ENCODE measurements at regions of chr16 and their contacts with region 1.

Region 1: DNA sequence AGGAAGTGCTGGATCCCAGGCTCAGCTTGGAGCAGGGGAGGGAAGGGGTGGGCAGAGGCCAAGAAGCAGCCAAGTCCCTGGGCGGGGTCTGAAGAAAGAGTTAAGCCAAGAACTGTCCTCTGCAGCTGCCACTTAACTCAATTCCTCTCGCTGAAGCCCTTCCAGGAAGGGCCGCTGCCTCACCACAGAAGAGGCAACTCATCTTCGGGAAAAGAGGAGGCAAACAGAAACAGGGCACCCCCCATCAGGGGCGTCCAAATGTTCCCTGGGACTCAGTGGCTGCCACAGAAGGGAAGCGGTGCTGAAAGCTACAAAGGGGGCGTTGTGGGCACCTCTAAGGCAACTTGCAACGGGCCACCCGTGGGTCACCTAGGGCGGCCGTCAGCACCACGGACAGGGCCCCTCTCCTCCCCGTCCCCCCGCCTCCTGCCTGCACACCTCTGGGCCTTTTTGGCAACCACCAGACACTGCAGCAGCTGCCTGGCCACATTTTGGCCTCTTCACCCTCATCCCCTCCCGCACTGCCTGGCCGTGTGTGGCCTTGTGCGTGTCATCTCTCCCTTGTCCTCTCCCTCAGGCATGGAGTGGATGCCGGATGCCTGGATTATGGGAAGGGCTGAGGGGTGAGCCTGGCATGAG is 2.5 kb downstream of the TLCD3B start:
- DNase-seq: peak; percentile 33
- H3K4me3 ChIP-seq: no peak overlapping the region
- H3K27ac ChIP-seq: no peak overlapping the region
- H3K4me1 ChIP-seq: no peaks in the 10 kb centered on the region
- H3K27me3 ChIP-seq: peaks cover 44% of the 10 kb centered on the region

Region 2: DNA sequence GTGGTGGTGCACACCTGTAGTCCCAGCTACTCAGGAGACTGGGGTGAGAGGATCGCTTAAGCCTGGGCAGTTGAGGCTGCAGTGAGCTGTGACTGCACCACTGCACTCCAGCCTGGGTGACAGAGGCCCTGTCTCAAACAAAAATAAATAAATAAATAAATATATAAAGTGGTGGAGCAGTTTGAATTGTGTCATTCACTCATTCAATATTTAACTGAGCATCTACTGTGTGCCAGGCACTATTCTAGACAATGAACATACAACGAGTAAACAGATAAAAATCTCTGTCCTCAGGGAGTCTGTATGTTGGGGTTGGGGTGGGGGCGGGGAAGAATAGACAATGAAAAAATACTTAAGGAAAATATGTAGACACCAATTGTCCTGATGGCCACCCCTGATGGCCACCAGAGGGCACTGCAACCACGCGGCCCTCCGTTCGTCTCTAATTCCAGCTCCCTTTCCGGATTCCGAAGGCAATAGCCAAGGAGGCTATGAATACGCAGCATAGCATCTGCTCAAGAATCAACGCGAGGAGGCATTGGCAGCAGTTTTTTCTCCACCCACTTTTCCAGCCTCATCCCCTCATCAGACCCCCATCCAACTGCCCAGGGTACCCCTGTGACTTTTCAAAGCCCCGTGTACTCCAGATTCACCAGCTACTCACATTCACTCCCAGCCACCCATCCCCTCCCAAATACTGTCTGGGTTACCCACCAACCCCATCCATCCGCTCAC is 328.1 kb before region 1 on chr16:
- in situ Hi-C with region 1: loop called (anchors 10 kb)
- DNase-seq: peak; percentile 94
- H3K4me3 ChIP-seq: no peak overlapping the region
- H3K27ac ChIP-seq: no peak overlapping the region
- H3K4me1 ChIP-seq: no peaks in the 10 kb centered on the region
- H3K27me3 ChIP-seq: no peaks in the 10 kb centered on the region; the same call in 1 of the 2 replicates

Region 3: DNA sequence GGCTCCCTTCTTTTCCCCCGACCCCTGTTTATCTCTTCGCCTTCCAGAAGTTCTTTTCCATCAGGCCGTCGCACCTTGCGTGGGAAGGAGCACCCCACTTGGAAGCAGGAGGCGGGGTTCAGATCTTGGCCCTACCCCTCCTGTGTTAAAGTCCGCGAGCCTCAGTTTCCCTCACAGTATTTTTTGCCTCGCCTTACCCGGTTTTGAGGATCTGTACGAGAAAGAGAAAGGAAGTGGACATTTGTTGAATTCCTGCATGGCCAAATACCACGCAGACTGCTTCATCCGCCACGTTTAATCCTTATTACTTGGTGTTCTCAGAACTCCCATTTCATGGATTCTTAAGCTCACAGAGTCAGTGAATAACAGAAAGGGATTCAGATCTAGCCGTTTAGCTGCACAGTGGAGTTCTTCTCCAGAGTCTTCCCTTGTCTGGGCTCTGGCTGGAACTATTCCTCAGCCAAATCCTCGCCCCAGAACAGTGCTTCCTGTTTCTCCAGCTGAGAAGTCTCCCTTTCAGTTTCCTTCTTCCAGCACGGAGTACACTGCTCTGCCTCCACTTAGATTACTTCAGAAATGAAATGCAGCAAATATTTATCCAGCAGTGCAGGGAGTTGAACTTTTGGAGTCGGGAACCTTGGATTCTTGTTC is 66.1 kb before region 1 on chr16:
- in situ Hi-C with region 1: no loop called
- DNase-seq: peak; percentile 58
- H3K4me3 ChIP-seq: peak overlapping the region; percentile 78
- H3K27ac ChIP-seq: peak overlapping the region; percentile 74
- H3K4me1 ChIP-seq: peaks cover 9% of the 10 kb centered on the region; the same call in 1 of the 2 replicates
- H3K27me3 ChIP-seq: no peaks in the 10 kb centered on the region

Measured in GM23248 (cell line).